ENCODE measurements at regions of chr12 and their contacts with region 1.

Region 1: DNA sequence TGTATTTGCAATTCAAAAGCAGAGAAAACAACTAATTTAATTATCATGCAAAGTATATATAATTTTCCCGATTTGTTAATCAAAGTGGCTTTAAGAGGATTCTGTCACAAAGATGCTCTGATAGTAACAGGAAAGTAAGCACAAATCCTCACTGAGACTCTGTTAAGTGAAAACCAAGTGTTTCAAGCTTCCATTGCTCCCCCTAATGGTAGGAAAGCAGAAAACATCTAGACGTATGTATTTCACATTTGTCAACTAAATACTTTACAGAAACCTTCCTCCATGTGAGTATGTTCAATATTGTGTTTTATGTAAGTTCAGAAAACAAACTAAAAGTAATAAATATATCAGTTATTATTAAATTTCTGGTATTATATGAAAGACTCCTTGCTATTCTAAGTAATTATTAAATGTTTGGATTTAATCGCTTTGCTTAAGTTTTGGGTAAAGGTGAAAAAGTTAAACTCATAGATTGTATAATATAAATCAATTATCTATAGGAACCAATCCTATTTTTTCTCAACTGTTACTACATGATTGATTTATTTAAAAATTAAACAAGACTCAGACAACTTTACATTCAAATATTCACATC is 1.5 kb upstream of the NTS start:
- DNase-seq: no peak
- H3K4me3 ChIP-seq: no peak overlapping the region
- H3K27ac ChIP-seq: no peak overlapping the region
- H3K4me1 ChIP-seq: no peaks in the 10 kb centered on the region
- H3K27me3 ChIP-seq: no peaks in the 10 kb centered on the region
- CTCF ChIP-seq: peak; percentile 61

Region 2: DNA sequence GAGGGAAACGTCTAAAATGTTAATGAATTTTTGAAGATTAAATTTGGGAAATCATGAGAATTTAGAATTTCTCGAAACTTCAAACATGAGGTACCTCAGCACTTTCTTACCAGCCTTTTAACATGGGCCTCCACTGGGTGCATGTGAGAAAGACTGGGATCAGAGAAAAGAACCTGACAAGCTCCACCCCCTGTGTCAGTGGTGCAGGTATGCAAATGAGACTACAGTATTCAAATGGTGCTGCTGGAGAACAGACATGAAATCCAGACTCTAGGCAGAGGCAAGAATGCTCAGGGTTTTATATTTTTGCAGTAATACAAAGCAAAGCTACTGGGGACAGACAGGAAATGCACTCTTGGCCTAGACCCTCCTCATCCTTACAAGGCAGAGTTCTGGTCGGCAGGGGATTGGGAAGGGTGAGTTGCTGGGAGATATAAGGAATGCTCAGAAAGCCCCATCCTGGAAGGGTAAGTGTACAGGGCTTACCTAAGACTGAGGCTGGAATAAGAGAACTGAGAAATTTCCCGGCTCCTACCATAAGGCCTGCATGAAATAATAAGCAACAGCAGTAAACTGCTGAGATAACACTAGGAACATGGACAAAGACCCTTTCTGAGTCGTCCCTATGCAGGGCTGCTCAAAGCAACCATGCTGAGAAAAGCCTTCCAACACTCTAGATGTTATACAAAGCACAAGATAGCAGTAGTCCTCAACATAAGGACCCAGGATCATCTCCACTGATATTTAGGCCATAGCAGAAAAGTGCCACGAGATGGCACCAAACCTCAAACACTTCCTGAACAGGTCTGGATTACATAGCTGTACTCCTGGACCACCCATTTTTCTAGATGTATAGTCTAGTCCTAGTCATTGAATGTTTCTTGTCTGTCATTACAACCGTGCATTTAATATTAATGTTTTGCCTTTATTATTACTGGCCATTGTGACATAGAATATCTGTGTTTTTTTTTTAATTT is 297.2 kb before region 1 on chr12:
- intact Hi-C with region 1: loop called (anchors 5 kb)
- DNase-seq: peak; percentile 32
- H3K4me3 ChIP-seq: no peak overlapping the region
- H3K27ac ChIP-seq: no peak overlapping the region
- H3K4me1 ChIP-seq: no peaks in the 10 kb centered on the region
- H3K27me3 ChIP-seq: no peaks in the 10 kb centered on the region
- CTCF ChIP-seq: peak; percentile 50